H1 (cell line): ENCODE measurements at regions of chr7 and their contacts with region 1.

Region 1: DNA sequence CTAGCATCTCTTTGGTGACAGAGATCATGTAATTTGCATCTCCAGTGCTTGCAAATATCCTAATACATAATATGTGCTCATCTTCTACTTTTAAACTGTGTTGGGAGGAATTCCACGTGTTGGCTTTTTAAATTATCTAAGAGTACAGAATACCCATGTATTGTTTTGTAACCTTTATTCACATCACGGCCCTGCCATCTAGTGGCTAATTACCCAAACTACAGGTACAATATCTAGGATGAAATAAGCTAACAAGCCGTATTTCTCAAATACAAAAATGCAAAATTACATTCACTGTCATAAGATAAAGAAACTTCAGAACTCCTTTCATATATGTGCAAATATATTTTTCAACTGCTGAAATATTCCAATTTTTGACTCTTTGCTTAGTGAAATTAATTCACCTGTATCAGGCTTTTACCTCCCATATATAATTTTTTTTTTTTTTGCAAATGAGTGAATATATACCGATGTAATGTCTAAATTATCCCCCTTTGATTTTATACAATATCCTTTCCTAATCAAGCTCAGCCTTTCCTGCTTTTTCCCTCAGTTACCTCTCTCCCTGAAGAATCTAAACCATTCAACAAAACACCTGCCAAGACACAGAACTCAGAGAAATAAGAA is 30.3 kb upstream of the LSM8 start:
- DNase-seq: no peak
- H3K4me3 ChIP-seq: no peak overlapping the region
- H3K27ac ChIP-seq: no peak overlapping the region
- H3K4me1 ChIP-seq: peaks cover 5 to 13% (median 10%) of the 10 kb centered on the region in 4 experiments; a peak in 6 of 7 replicates
- H3K27me3 ChIP-seq: no peaks in the 10 kb centered on the region
- CTCF ChIP-seq: peak in 2 of 3 experiments; percentile 44 to 57; a peak in 2 of 4 replicates
- EP300 ChIP-seq: no peak
- POLR2A ChIP-seq: no peak
- RAD21 ChIP-seq: peak; percentile 79 to 85

Region 2: DNA sequence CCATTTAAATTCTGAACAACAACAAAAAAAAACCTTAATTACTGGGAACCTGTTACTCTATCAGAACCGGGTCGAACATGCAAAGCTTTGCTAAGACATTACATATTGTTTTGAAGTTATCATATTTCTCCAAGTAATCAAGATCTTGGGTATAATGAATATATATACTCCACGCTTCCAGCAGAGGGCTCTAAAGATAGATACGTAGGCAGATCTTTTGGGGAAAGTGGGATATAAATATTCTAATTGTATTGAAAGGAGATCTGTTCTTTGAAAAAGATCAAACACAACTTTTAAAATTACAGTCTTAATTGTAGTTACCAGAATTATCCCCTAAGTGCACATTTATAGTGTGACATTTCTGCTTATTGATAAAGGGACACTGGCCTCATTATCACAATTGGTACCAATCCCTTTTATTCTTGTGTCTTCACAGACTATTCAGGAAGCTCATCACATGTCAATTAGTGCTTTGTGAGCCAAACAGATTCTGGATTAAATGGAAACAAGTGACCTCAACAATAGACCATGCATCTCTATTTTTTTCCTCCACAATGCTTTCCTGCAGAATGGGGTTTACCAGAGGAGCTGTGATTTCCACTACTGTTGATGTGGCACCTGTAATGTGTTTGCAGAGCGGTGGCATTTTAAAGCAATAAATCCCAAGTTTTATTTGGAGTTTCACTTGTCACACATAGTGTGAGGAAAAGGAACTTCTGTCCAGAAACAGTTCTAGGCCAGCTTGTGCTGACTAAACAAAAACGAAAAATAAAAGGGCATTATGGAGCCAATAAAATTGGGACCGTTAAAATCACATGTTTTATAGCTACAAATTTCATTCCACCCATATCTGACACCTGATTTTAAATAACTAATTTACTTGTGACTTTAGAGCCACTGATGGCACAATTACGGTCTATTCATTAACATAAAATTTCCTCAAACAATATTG is 402.8 kb before region 1 on chr7:
- CTCF ChIA-PET with region 1: interaction called, 15 read pairs
- POLR2A ChIA-PET with region 1: no interaction called
- DNase-seq: no peak
- H3K4me3 ChIP-seq: no peak overlapping the region
- H3K27ac ChIP-seq: no peak overlapping the region
- H3K4me1 ChIP-seq: no peaks in the 10 kb centered on the region
- H3K27me3 ChIP-seq: no peaks in the 10 kb centered on the region
- CTCF ChIP-seq: peak in 2 of 3 experiments; percentile 18 to 26; a peak in 2 of 4 replicates
- EP300 ChIP-seq: no peak
- POLR2A ChIP-seq: no peak
- RAD21 ChIP-seq: peak in 1 of 2 experiments; percentile 50

Region 3: DNA sequence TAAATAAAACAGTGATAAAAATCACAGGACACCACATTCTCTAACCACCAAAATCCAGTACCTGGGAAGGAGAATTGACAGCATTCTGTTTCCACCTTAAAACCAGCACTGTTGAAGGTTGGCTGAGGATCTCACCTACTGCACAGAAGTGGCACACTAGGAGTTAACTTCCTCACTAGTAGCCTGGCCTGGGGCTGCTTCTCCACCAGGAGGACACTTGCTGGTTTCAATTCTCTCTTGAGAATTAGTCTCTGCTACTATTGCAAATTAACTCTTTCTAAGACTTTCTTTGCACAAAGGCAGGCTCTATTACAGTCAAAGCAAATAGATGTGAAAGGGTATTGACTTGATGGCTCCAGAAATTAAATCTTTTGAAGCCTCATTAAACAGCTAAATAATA is 278.1 kb before region 1 on chr7:
- CTCF ChIA-PET with region 1: interaction called, 11 read pairs
- POLR2A ChIA-PET with region 1: no interaction called
- DNase-seq: peak in 1 of 2 experiments; percentile 58
- H3K4me3 ChIP-seq: no peak overlapping the region
- H3K27ac ChIP-seq: no peak overlapping the region
- H3K4me1 ChIP-seq: peaks cover 0 to 10% (median 6%) of the 10 kb centered on the region in 4 experiments; a peak in 6 of 7 replicates
- H3K27me3 ChIP-seq: no peaks in the 10 kb centered on the region
- CTCF ChIP-seq: peak; percentile 30 to 64 (median 48)
- EP300 ChIP-seq: no peak
- POLR2A ChIP-seq: no peak
- RAD21 ChIP-seq: peak; percentile 35 to 57